Activated CD8-positive, alpha-beta T cell treated with anti-CD3 and anti-CD28 coated beads for 36 hours (primary cell): ENCODE measurements at regions of chr10 and their contacts with region 1.

Region 1: GRCh38 chr10:4813023-4813422 is 13.0 kb upstream of the AKR1E2 start:
- DNase-seq: no peak
- ATAC-seq: no peak
- H3K4me3 Mint-ChIP-seq: no peak overlapping the region
- H3K27ac Mint-ChIP-seq: no peak overlapping the region
- H3K4me1 Mint-ChIP-seq: no peaks in the 10 kb centered on the region
- H3K27me3 Mint-ChIP-seq: peaks cover 8% of the 10 kb centered on the region
- CTCF ChIP-seq: no peak

Region 2: DNA sequence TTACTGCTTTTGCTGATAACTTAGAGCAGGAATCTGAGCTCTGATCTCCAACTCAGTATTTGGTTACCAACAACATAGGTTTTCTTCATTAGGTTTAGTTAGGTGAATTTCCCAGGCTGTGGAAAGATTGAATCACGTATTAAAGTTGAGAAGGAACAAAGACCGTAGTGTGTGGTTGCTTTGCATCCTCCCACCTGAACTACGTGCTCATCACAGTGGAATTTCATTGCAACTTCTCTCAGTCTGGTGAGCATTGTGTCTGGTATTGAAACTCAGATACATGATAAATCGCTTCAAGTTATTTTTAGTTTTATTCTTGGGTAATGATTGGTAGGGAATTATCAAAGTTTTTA is 126.4 kb before region 1 on chr10:
- CTCF ChIA-PET with region 1: no interaction called
- POLR2A ChIA-PET with region 1: no interaction called
- intact Hi-C with region 1: no loop called
- DNase-seq: peak; percentile 40
- ATAC-seq: peak; percentile 83
- H3K4me3 Mint-ChIP-seq: no peak overlapping the region
- H3K27ac Mint-ChIP-seq: peak overlapping the region; percentile 65
- H3K4me1 Mint-ChIP-seq: peaks cover 35% of the 10 kb centered on the region
- H3K27me3 Mint-ChIP-seq: peaks cover 19% of the 10 kb centered on the region
- CTCF ChIP-seq: no peak

Region 3: GRCh38 chr10:4825851-4826665 is 13.0 kb after region 1 on chr10 and contains the start of gene AKR1E2:
- CTCF ChIA-PET with region 1: interaction called, 74 read pairs
- POLR2A ChIA-PET with region 1: no interaction called
- intact Hi-C with region 1: no loop called
- DNase-seq: peak; percentile 89
- ATAC-seq: peak; percentile 93
- H3K4me3 Mint-ChIP-seq: peak within 1 kb of the TSS; percentile 74
- H3K27ac Mint-ChIP-seq: peak within 1 kb of the TSS; percentile 65
- H3K4me1 Mint-ChIP-seq: peaks cover 7% of the 10 kb centered on the region
- H3K27me3 Mint-ChIP-seq: peaks cover 33% of the 10 kb centered on the region
- CTCF ChIP-seq: no peak
- total RNA-seq, gene AKR1E2: 6.1 to 6.5 TPM

Region 4: DNA sequence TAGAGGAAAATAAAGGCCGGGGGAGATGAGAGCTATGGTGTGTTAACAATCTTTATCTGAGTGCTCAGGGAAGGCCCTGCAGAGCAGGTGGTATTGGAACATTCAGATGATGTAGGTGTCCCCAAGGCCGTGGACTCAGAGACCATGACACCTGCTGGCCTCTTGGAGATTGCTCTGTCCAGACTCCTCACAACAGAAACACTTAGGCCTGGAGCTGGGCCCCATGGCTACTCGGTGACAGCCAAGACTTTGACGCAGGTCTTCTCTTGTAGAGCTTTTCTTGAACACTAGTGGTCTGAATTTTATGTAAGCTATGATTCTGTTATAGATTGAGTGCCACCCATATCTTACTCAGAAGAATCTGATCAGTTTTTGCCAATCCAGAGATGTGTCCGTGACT is 26.4 kb after region 1 on chr10:
- CTCF ChIA-PET with region 1: interaction called, 74 read pairs
- POLR2A ChIA-PET with region 1: no interaction called
- intact Hi-C with region 1: no loop called
- DNase-seq: no peak
- ATAC-seq: no peak
- H3K4me3 Mint-ChIP-seq: no peak overlapping the region
- H3K27ac Mint-ChIP-seq: no peak overlapping the region
- H3K4me1 Mint-ChIP-seq: peaks cover 17% of the 10 kb centered on the region
- H3K27me3 Mint-ChIP-seq: peaks cover 2% of the 10 kb centered on the region
- CTCF ChIP-seq: no peak

Region 5: GRCh38 chr10:5002013-5002727 is 189.1 kb after region 1 on chr10:
- CTCF ChIA-PET with region 1: no interaction called
- POLR2A ChIA-PET with region 1: no interaction called
- intact Hi-C with region 1: no loop called
- DNase-seq: no peak
- ATAC-seq: no peak
- H3K4me3 Mint-ChIP-seq: no peak overlapping the region
- H3K27ac Mint-ChIP-seq: no peak overlapping the region
- H3K4me1 Mint-ChIP-seq: no peaks in the 10 kb centered on the region
- H3K27me3 Mint-ChIP-seq: no peaks in the 10 kb centered on the region
- CTCF ChIP-seq: no peak